GM12878 (cell line): ENCODE measurements at regions of chr20 and their contacts with region 1.

Region 1: GRCh38 chr20:59087829-59088433 is 45.3 kb upstream of the PRELID3B start:
- DNase-seq: no peak
- ATAC-seq: peak; percentile 91
- H3K4me3 ChIP-seq: no peak overlapping the region
- H3K27ac ChIP-seq: no peak overlapping the region
- H3K4me1 ChIP-seq: no peaks in the 10 kb centered on the region
- H3K27me3 ChIP-seq: peaks cover 0 to 11% of the 10 kb centered on the region in 2 experiments
- CTCF ChIP-seq: peak; percentile 75 to 91 (median 83)
- EP300 ChIP-seq: no peak
- POLR2A ChIP-seq: no peak
- RAD21 ChIP-seq: peak; percentile 83

Region 2: GRCh38 chr20:58870239-58871014 is 217.5 kb before region 1 on chr20:
- CTCF ChIA-PET with region 1: interaction called, 24 read pairs
- POLR2A ChIA-PET with region 1: no interaction called
- RAD21 ChIA-PET with region 1: interaction called, 6 read pairs
- SMC1A ChIA-PET with region 1: interaction called, 20 read pairs
- in situ Hi-C with region 1: no loop called
- intact Hi-C with region 1: no loop called
- DNase-seq: no peak
- ATAC-seq: peak; percentile 91
- H3K4me3 ChIP-seq: no peak overlapping the region
- H3K27ac ChIP-seq: no peak overlapping the region
- H3K4me1 ChIP-seq: peaks cover 10% of the 10 kb centered on the region
- H3K27me3 ChIP-seq: no peaks in the 10 kb centered on the region
- CTCF ChIP-seq: peak; percentile 81 to 87 (median 87)
- EP300 ChIP-seq: peak; percentile 33 to 48; a peak in 1 of 4 replicates
- POLR2A ChIP-seq: no peak
- RAD21 ChIP-seq: peak; percentile 82

Region 3: DNA sequence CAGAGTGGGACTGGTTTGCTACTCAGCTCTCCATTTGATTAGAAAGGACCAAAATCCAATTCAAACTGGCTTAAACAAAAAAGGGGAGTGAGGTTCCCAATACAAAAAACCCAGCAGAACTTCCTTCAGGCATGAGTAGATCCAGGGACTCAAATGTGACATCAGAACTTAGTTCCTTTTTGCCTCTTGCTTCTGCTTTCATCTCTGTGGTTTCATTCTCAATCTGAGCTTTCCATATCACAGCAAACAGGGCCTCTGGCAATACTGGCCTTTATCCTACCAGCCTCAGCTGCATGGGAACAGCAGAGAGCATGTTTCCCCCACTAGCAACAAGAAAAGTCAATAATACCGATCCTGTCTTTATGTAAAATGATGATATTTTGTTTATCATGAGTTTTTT is 16.7 kb before region 1 on chr20:
- CTCF ChIA-PET with region 1: interaction called, 13 read pairs
- POLR2A ChIA-PET with region 1: no interaction called
- RAD21 ChIA-PET with region 1: no interaction called
- SMC1A ChIA-PET with region 1: interaction called, 3 read pairs
- in situ Hi-C with region 1: no loop called
- intact Hi-C with region 1: no loop called
- DNase-seq: no peak
- ATAC-seq: peak; percentile 76
- H3K4me3 ChIP-seq: no peak overlapping the region
- H3K27ac ChIP-seq: no peak overlapping the region
- H3K4me1 ChIP-seq: peaks cover 7% of the 10 kb centered on the region
- H3K27me3 ChIP-seq: peaks cover 5 to 6% of the 10 kb centered on the region in 2 experiments
- CTCF ChIP-seq: no peak
- EP300 ChIP-seq: no peak
- POLR2A ChIP-seq: no peak
- RAD21 ChIP-seq: no peak

Region 4: DNA sequence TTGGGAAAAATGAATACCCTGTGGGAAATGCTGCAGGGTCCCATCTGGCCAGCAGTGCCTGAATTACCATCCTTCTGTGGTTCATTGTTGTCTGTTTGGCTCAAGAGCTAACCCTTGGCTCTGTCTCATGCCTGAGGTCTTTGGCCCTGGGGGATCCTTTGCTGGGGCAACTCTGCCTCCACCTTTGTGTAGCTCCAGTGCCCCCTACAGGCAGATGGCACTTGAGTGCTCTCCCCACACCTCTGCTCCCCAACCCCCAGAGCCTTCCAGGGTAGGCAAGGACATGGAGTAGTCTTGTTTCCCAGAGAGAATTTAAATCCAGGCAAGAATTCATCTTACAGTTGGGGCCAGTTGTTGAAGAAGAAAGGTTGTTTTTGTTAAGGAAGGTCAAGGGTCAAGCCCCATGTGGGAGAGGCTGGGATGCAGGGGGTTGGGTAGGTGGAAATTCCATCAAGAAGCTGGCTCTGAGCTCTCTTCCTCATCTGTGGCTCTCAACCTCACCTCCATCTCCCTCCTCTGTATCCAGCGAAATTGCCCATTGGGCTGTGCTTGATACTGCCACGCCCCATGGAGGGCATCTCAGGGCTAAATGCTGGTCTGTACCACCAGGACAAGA is 119.9 kb after region 1 on chr20:
- CTCF ChIA-PET with region 1: interaction called, 50 read pairs
- POLR2A ChIA-PET with region 1: no interaction called
- RAD21 ChIA-PET with region 1: interaction called, 13 read pairs
- SMC1A ChIA-PET with region 1: interaction called, 10 read pairs
- in situ Hi-C with region 1: loop called (anchors 5 kb)
- intact Hi-C with region 1: loop called (anchors 5 kb)
- DNase-seq: peak; percentile 2
- ATAC-seq: peak; percentile 97
- H3K4me3 ChIP-seq: no peak overlapping the region
- H3K27ac ChIP-seq: no peak overlapping the region
- H3K4me1 ChIP-seq: no peaks in the 10 kb centered on the region
- H3K27me3 ChIP-seq: no peaks in the 10 kb centered on the region
- CTCF ChIP-seq: peak; percentile 76 to 91 (median 78)
- EP300 ChIP-seq: no peak
- POLR2A ChIP-seq: no peak
- RAD21 ChIP-seq: peak; percentile 87

Region 5: GRCh38 chr20:59403261-59403961 is 315.5 kb after region 1 on chr20:
- CTCF ChIA-PET with region 1: interaction called, 3 read pairs
- POLR2A ChIA-PET with region 1: no interaction called
- RAD21 ChIA-PET with region 1: no interaction called
- SMC1A ChIA-PET with region 1: no interaction called
- in situ Hi-C with region 1: no loop called
- intact Hi-C with region 1: loop called (anchors 10 kb)
- DNase-seq: no peak
- ATAC-seq: peak; percentile 75
- H3K4me3 ChIP-seq: no peak overlapping the region
- H3K27ac ChIP-seq: no peak overlapping the region
- H3K4me1 ChIP-seq: no peaks in the 10 kb centered on the region
- H3K27me3 ChIP-seq: peaks cover 0 to 2% of the 10 kb centered on the region in 2 experiments; a peak in 2 of 4 replicates
- CTCF ChIP-seq: peak; percentile 68 to 84 (median 78)
- EP300 ChIP-seq: no peak
- POLR2A ChIP-seq: no peak
- RAD21 ChIP-seq: peak; percentile 65